ENCODE measurements at regions of chr14 and their contacts with region 1.

Region 1: GRCh38 chr14:97458661-97459579 is 661.7 kb downstream of the VRK1 start:
- DNase-seq: peak; percentile 53 to 87 (median 81)
- ATAC-seq: peak; percentile 91
- H3K4me3 ChIP-seq: peak overlapping the region; percentile 85
- H3K4me3 Mint-ChIP-seq: peak overlapping the region; percentile 89 to 99 (median 92)
- H3K27ac ChIP-seq: peak overlapping the region; percentile 79
- H3K27ac Mint-ChIP-seq: peak overlapping the region; percentile 96 to 99 (median 98)
- H3K4me1 ChIP-seq: peaks cover 30 to 45% of the 10 kb centered on the region in 2 donors
- H3K4me1 Mint-ChIP-seq: peaks cover 33 to 79% (median 53%) of the 10 kb centered on the region in 7 donors
- H3K27me3 ChIP-seq: no peaks in the 10 kb centered on the region
- H3K27me3 Mint-ChIP-seq: no peaks in the 10 kb centered on the region

Region 2: DNA sequence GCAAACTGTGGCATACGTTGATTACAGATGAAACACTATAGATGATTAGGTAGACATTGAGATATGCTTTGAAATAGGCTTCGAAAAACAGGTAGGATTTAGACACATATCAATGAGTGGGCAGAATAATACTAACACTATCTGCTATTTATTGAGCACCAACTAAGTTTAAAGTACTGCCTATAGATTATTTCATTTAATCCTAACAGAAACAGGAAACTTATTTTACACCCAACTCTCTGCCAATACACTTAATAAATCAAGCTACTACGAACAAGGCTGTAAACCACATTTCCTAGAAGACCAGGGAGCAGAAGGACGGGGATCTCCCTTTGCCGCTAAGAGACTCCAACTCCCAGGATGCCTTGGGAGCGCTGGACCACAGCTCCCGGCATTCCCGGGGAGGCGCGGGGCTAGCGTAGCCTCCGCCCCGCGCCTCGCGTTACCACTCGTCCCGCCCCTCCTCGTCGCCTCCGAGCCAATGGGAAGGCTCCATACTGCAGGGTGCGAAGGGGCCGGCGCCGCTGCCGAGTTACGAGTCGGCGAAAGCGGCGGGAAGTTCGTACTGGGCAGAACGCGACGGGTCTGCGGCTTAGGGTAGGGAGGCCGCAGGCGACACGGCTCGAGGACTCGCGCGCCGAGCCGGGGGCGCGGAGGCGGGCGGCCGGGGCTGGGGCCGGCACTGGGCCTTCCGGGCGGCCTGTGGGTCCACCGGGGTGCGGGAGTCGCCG is 661.9 kb before region 1 on chr14 and contains the start of gene VRK1:
- CTCF ChIA-PET with region 1: no interaction called
- POLR2A ChIA-PET with region 1: no interaction called
- intact Hi-C with region 1: loop called in 1 of 2 experiments (anchors 5 kb)
- DNase-seq: peak; percentile 87 to 93 (median 90)
- ATAC-seq: peak; percentile 99
- H3K4me3 ChIP-seq: peak within 1 kb of the TSS; percentile 75
- H3K4me3 Mint-ChIP-seq: peak within 1 kb of the TSS; percentile 86 to 93 (median 91)
- H3K27ac ChIP-seq: peak within 1 kb of the TSS; percentile 79
- H3K27ac Mint-ChIP-seq: peak within 1 kb of the TSS; percentile 75 to 95 (median 90)
- H3K4me1 ChIP-seq: peaks cover 10 to 14% of the 10 kb centered on the region in 2 donors
- H3K4me1 Mint-ChIP-seq: peaks cover 10 to 33% (median 25%) of the 10 kb centered on the region in 7 donors
- H3K27me3 ChIP-seq: no peaks in the 10 kb centered on the region
- H3K27me3 Mint-ChIP-seq: peaks cover 0 to 10% (median 3%) of the 10 kb centered on the region in 5 donors
- total RNA-seq, gene VRK1: 28.5 to 52.2 (median 40.7) TPM

Region 3: GRCh38 chr14:97080991-97081390 is 377.9 kb before region 1 on chr14:
- CTCF ChIA-PET with region 1: no interaction called
- POLR2A ChIA-PET with region 1: no interaction called
- intact Hi-C with region 1: no loop called
- DNase-seq: no peak
- ATAC-seq: no peak
- H3K4me3 ChIP-seq: no peak overlapping the region
- H3K4me3 Mint-ChIP-seq: no peak overlapping the region
- H3K27ac ChIP-seq: no peak overlapping the region
- H3K27ac Mint-ChIP-seq: no peak overlapping the region
- H3K4me1 ChIP-seq: peaks cover 8 to 9% of the 10 kb centered on the region in 2 donors
- H3K4me1 Mint-ChIP-seq: peaks cover 0 to 15% (median 11%) of the 10 kb centered on the region in 7 donors
- H3K27me3 ChIP-seq: no peaks in the 10 kb centered on the region
- H3K27me3 Mint-ChIP-seq: peaks cover 4 to 15% (median 8%) of the 10 kb centered on the region in 5 donors

Region 4: GRCh38 chr14:97306760-97307246 is 152.1 kb before region 1 on chr14:
- CTCF ChIA-PET with region 1: no interaction called
- POLR2A ChIA-PET with region 1: no interaction called
- intact Hi-C with region 1: loop called in 1 of 2 experiments (anchors 5 kb)
- DNase-seq: peak in 3 of 9 donors; percentile 2 to 15 (median 6)
- ATAC-seq: no peak
- H3K4me3 ChIP-seq: no peak overlapping the region
- H3K4me3 Mint-ChIP-seq: peak overlapping the region in 2 of 10 donors; percentile 25 to 34
- H3K27ac ChIP-seq: no peak overlapping the region
- H3K27ac Mint-ChIP-seq: peak overlapping the region; percentile 31 to 95 (median 48)
- H3K4me1 ChIP-seq: peaks cover 8% of the 10 kb centered on the region in 2 donors
- H3K4me1 Mint-ChIP-seq: peaks cover 10 to 42% (median 26%) of the 10 kb centered on the region in 7 donors
- H3K27me3 ChIP-seq: no peaks in the 10 kb centered on the region
- H3K27me3 Mint-ChIP-seq: no peaks in the 10 kb centered on the region

Region 5: GRCh38 chr14:97442363-97442762 is 16.6 kb before region 1 on chr14:
- CTCF ChIA-PET with region 1: no interaction called
- POLR2A ChIA-PET with region 1: interaction called, 5 read pairs
- intact Hi-C with region 1: loop called in 1 of 2 experiments (anchors 2 kb)
- DNase-seq: peak in 5 of 9 donors; percentile 10 to 42 (median 13)
- ATAC-seq: peak; percentile 57
- H3K4me3 ChIP-seq: no peak overlapping the region
- H3K4me3 Mint-ChIP-seq: peak overlapping the region in 4 of 10 donors; percentile 2 to 52 (median 20)
- H3K27ac ChIP-seq: no peak overlapping the region
- H3K27ac Mint-ChIP-seq: peak overlapping the region; percentile 51 to 88 (median 68)
- H3K4me1 ChIP-seq: peaks cover 0 to 9% of the 10 kb centered on the region in 2 donors
- H3K4me1 Mint-ChIP-seq: peaks cover 10 to 36% (median 22%) of the 10 kb centered on the region in 7 donors
- H3K27me3 ChIP-seq: no peaks in the 10 kb centered on the region
- H3K27me3 Mint-ChIP-seq: no peaks in the 10 kb centered on the region

Region 6: GRCh38 chr14:97707603-97708002 is 248.7 kb after region 1 on chr14:
- CTCF ChIA-PET with region 1: no interaction called
- POLR2A ChIA-PET with region 1: no interaction called
- intact Hi-C with region 1: loop called (anchors 5 kb)
- DNase-seq: peak in 1 of 9 donors; percentile 19
- ATAC-seq: peak; percentile 25
- H3K4me3 ChIP-seq: peak overlapping the region; percentile 7
- H3K4me3 Mint-ChIP-seq: peak overlapping the region in 9 of 10 donors; percentile 7 to 83 (median 52)
- H3K27ac ChIP-seq: no peak overlapping the region
- H3K27ac Mint-ChIP-seq: peak overlapping the region; percentile 26 to 96 (median 85)
- H3K4me1 ChIP-seq: peaks cover 81 to 85% of the 10 kb centered on the region in 2 donors
- H3K4me1 Mint-ChIP-seq: peaks cover 70 to 100% (median 98%) of the 10 kb centered on the region in 7 donors
- H3K27me3 ChIP-seq: no peaks in the 10 kb centered on the region
- H3K27me3 Mint-ChIP-seq: no peaks in the 10 kb centered on the region

Region 7: GRCh38 chr14:97776934-97777558 is 318.1 kb after region 1 on chr14:
- CTCF ChIA-PET with region 1: no interaction called
- POLR2A ChIA-PET with region 1: no interaction called
- intact Hi-C with region 1: loop called (anchors 1 to 10 kb)
- DNase-seq: peak in 4 of 9 donors; percentile 3 to 27 (median 21)
- ATAC-seq: peak; percentile 46
- H3K4me3 ChIP-seq: no peak overlapping the region
- H3K4me3 Mint-ChIP-seq: peak overlapping the region in 6 of 10 donors; percentile 37 to 76 (median 46)
- H3K27ac ChIP-seq: no peak overlapping the region
- H3K27ac Mint-ChIP-seq: peak overlapping the region in 6 of 9 donors; percentile 32 to 86 (median 53)
- H3K4me1 ChIP-seq: peaks cover 0 to 14% of the 10 kb centered on the region in 2 donors
- H3K4me1 Mint-ChIP-seq: peaks cover 9 to 35% (median 28%) of the 10 kb centered on the region in 7 donors
- H3K27me3 ChIP-seq: no peaks in the 10 kb centered on the region
- H3K27me3 Mint-ChIP-seq: no peaks in the 10 kb centered on the region

Region 8: GRCh38 chr14:99192028-99192621 is 1733.2 kb after region 1 on chr14:
- CTCF ChIA-PET with region 1: no interaction called
- POLR2A ChIA-PET with region 1: no interaction called
- intact Hi-C with region 1: loop called in 1 of 2 experiments (anchors 5 kb)
- DNase-seq: peak in 3 of 9 donors; percentile 45 to 64 (median 49)
- ATAC-seq: peak; percentile 28
- H3K4me3 ChIP-seq: peak overlapping the region; percentile 61
- H3K4me3 Mint-ChIP-seq: peak overlapping the region; percentile 85 to 94 (median 90)
- H3K27ac ChIP-seq: peak overlapping the region; percentile 85
- H3K27ac Mint-ChIP-seq: peak overlapping the region; percentile 93 to 100 (median 98)
- H3K4me1 ChIP-seq: peaks cover 84 to 85% of the 10 kb centered on the region in 2 donors
- H3K4me1 Mint-ChIP-seq: peaks cover 55 to 97% (median 93%) of the 10 kb centered on the region in 7 donors
- H3K27me3 ChIP-seq: no peaks in the 10 kb centered on the region
- H3K27me3 Mint-ChIP-seq: no peaks in the 10 kb centered on the region

Measured in naive thymus-derived CD4-positive, alpha-beta T cell (primary cell).